Activated naive CD4-positive, alpha-beta T cell treated with anti-CD3 and anti-CD28 coated beads, Interleukin-2, amount 10 ng/mL, durations not matched to agents 7 days and 5 days (primary cell): ENCODE measurements at regions of chrX and their contacts with region 1.

Region 1: GRCh38 chrX:154918060-154918483 is 31.9 kb downstream of the F8A1 start:
- DNase-seq: peak; percentile 30
- H3K4me3 Mint-ChIP-seq: peak overlapping the region; percentile 46
- H3K27ac Mint-ChIP-seq: no peak overlapping the region
- H3K4me1 Mint-ChIP-seq: no peaks in the 10 kb centered on the region
- H3K27me3 Mint-ChIP-seq: peaks cover 16% of the 10 kb centered on the region

Region 2: DNA sequence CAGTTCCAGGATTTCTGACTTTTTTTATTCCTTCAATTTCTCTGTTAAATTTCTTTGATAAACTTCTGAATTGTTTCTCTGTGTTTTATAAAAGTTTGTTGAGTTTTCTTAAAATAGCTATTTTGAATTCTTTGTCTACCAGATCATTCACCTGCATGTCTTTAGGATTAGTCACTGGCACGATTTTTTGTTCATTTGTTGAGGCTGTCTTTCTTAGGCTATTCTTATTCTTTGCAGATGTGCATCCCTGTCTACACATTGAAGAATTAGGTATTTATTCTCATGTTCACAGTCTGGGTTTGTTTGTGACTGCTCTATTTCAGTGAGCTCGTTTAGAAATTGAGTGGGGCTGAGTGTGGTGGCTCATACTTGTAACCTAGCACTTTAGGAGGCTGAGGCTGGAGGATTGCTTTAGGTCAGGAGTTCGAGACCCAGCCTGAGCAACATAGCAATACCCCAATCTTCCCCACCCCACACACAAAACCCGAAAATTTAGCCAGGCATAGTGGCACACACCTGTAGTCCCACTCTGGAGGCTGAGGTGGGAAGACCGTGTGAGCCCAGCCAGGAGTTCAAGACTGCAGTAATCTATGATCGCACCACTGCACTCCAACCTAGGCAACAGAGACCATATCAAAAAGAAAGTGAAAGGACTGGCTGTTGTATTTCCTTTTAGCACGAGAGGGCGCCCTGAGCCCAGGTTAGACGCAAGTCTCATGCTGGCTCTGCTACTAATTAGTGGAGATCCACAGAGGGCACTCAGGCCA is 62.4 kb after region 1 on chrX:
- CTCF ChIA-PET with region 1: interaction called, 16 read pairs
- DNase-seq: peak; percentile 84
- H3K4me3 Mint-ChIP-seq: peak overlapping the region; percentile 54
- H3K27ac Mint-ChIP-seq: peak overlapping the region; percentile 86
- H3K4me1 Mint-ChIP-seq: peaks cover 27% of the 10 kb centered on the region
- H3K27me3 Mint-ChIP-seq: no peaks in the 10 kb centered on the region

Region 3: GRCh38 chrX:155035688-155036087 is 117.6 kb after region 1 on chrX:
- CTCF ChIA-PET with region 1: no interaction called
- DNase-seq: no peak
- H3K4me3 Mint-ChIP-seq: no peak overlapping the region
- H3K27ac Mint-ChIP-seq: no peak overlapping the region
- H3K4me1 Mint-ChIP-seq: peaks cover 5% of the 10 kb centered on the region
- H3K27me3 Mint-ChIP-seq: no peaks in the 10 kb centered on the region

Region 4: GRCh38 chrX:155056877-155057792 is 139.1 kb after region 1 on chrX:
- CTCF ChIA-PET with region 1: interaction called, 21 read pairs
- DNase-seq: peak; percentile 58
- H3K4me3 Mint-ChIP-seq: peak overlapping the region; percentile 31
- H3K27ac Mint-ChIP-seq: peak overlapping the region; percentile 64
- H3K4me1 Mint-ChIP-seq: peaks cover 29% of the 10 kb centered on the region
- H3K27me3 Mint-ChIP-seq: no peaks in the 10 kb centered on the region

Region 5: DNA sequence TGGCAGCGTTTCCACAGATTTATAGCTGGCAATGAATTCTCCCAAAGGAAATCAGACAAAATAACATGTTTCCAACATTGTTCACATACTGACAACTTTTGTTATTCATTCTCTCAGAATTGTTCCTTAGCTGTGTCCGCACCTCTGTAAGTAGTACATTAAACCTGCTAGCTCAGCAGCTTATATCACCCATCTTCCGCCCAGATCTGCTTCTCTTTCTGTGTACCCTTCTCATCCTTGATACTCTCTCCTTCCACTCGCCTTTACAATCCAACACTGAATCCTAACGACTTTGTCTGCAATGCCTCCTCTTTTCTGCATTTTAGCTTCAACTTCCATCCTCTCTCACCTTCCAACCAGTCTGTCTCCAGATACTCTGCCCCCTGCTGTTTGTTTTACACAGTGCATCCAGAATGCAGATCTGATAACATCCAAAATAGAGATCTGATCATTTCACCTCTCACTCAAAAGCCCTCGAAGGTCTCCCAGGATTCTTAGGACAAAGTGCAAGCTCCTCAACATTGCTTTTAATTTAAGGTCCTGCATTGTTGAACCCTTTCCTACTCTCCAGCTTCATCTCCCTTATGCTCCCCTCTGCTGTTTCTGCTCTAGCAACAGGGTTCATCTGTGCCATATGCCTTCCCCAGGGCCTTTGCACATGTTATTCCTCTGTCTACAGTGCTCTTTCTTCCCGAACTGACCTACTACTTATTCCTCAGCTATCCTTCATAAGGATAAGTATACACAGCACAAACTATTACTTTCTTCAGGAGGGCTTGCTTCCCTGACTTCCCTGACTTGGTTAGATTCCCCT is 230.9 kb after region 1 on chrX:
- CTCF ChIA-PET with region 1: interaction called, 20 read pairs
- DNase-seq: peak; percentile 54
- H3K4me3 Mint-ChIP-seq: no peak overlapping the region
- H3K27ac Mint-ChIP-seq: no peak overlapping the region
- H3K4me1 Mint-ChIP-seq: peaks cover 6% of the 10 kb centered on the region
- H3K27me3 Mint-ChIP-seq: no peaks in the 10 kb centered on the region

Region 6: GRCh38 chrX:155179346-155179986 is 261.4 kb after region 1 on chrX:
- CTCF ChIA-PET with region 1: no interaction called
- DNase-seq: no peak
- H3K4me3 Mint-ChIP-seq: no peak overlapping the region
- H3K27ac Mint-ChIP-seq: no peak overlapping the region
- H3K4me1 Mint-ChIP-seq: no peaks in the 10 kb centered on the region
- H3K27me3 Mint-ChIP-seq: no peaks in the 10 kb centered on the region